ENCODE measurements at regions of chr16 and their contacts with region 1.

Region 1: DNA sequence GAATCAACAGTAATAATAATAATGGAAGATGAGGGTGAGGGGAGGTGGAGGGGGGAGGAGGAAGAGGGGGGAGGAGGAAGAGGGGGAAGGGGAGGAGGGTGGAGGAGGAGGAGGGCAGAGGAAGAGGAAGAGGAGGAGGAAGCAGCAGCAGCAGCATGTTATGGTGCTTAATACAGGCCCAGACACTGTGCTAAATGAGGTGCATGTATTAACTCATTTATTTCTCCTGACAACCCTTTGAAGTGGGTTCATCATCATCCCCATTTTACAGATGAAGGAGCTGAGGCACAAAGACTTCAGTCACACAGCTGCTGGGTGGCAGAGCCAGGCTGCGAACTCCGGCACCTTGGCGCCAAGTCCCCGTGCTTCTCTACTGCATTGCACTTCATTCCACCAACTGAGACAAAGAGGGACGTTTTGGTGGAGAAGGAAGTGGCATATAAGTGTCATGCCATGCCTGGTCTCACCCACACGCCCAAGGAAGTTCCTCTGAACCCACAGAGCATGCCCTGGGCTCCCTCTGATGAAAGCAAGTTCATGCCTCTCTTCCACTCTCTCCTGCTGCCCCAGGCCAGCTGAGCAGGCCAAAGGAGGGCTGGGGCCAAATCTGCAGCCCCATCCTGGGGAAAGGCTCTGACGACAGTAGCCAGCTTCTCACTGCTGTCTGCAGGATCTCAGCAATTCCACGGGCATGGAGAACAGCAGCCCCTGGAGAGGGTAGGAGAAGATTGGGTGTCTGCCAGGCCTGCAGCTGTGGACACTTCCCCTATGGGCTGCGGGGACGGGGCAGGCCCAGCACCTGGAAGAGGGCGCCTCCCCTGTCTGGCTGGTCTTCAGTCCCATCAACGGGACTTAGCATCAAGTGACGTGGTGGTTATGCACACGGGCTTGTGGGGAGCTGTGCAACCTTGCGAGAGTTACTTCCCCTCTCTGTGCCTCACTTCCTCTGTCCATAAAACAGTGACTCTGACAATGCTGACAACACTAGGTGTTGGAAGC is 21.8 kb downstream of the XYLT1 start:
- DNase-seq: peak in 7 of 9 donors; percentile 9 to 37 (median 32)
- ATAC-seq: peak; percentile 82
- H3K4me3 ChIP-seq: peak overlapping the region; percentile 45
- H3K4me3 Mint-ChIP-seq: peak overlapping the region; percentile 12 to 73 (median 64)
- H3K27ac ChIP-seq: peak overlapping the region; percentile 54
- H3K27ac Mint-ChIP-seq: peak overlapping the region; percentile 72 to 94 (median 84)
- H3K4me1 ChIP-seq: peaks cover 25 to 38% of the 10 kb centered on the region in 2 donors
- H3K4me1 Mint-ChIP-seq: peaks cover 35 to 66% (median 53%) of the 10 kb centered on the region in 7 donors
- H3K27me3 ChIP-seq: no peaks in the 10 kb centered on the region
- H3K27me3 Mint-ChIP-seq: no peaks in the 10 kb centered on the region

Region 2: DNA sequence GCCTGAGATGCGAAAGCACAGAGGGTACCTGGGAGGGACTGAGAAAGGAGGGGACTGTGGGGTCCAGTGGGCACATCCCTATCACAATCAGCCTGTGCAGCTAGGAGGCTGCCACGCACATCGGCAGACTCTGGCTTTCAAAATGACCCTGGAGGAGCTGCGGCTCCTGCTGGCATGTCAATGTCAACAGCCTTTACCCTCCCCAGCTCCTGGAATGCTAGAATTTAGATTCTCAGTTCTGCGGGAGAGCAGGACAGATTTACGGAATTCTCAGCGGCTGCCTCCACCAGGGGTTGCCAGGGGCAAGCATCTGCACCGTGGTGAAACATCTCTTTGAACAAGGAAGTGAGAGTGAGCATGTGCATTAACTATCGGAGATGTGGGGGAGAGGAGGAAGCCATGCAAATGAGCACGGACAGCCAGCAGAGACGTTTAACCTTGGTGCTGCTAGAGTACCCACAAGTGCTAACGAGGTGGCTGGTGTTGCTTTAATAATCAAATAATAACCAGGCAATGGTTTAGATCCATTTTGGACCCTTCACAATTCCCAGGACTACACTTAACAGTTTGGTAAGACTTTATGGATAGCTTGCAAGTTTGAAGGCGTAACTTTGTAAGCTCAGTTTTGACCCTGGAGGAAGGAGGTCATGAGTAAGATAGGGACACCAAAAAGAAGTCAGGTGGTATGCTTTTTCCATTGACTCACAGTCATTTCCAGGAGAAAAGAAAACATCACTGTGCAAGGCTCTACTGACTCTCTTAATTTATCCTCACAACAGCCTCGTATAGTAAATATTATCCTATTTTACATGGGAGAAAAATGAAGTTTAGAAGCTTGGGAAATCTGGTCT is 32.3 kb before region 1 on chr16:
- CTCF ChIA-PET with region 1: no interaction called
- POLR2A ChIA-PET with region 1: no interaction called
- intact Hi-C with region 1: loop called in 1 of 2 experiments (anchors 2 kb)
- DNase-seq: peak; percentile 24 to 65 (median 55)
- ATAC-seq: peak; percentile 93
- H3K4me3 ChIP-seq: peak overlapping the region; percentile 22
- H3K4me3 Mint-ChIP-seq: peak overlapping the region; percentile 68 to 91 (median 85)
- H3K27ac ChIP-seq: peak overlapping the region; percentile 60
- H3K27ac Mint-ChIP-seq: peak overlapping the region; percentile 79 to 97 (median 91)
- H3K4me1 ChIP-seq: peaks cover 13 to 14% of the 10 kb centered on the region in 2 donors
- H3K4me1 Mint-ChIP-seq: peaks cover 18 to 69% (median 52%) of the 10 kb centered on the region in 7 donors
- H3K27me3 ChIP-seq: no peaks in the 10 kb centered on the region
- H3K27me3 Mint-ChIP-seq: no peaks in the 10 kb centered on the region